Ovary (tissue), 10 donors: ENCODE measurements at regions of chr1 and their contacts with region 1.

Region 1: DNA sequence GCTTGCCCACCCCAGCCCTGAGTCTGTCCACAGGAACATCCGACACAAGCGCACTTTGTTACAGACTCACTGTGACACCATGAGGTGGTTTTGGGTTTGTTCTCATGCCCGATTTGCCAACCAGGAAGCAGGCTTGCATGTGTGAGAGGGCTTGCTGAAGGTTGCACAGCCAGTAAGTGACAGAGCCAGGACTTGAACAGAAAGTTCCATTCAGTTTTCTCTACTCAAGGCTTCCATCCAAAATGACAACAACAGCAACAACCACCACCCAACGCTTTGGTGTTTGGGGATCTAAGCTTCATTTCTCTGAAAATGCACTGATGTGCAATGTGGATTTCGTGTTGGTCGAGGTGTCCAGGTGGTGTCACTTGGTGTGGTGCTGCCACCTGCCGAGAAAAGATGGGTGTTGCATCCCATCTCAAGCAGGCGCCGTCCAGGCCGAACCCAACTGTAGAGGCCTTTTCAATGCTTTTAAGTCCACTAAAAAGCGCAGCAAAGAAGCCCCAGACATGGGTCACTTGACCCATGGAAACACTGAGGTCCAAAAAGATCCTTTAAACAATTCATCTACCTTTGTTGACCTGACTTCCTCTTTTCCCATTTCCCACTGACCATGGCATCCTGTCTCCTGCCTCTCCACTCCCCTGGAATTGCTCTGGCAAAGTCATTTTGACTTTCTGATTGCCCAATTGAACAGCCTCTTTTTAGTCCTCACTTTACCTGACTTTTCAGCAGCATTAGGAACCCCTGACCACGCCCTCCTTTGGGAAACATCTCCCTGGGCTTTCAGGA is 12.2 kb downstream of the CITED4 start:
- DNase-seq: peak; percentile 64 to 80 (median 75)
- H3K4me3 ChIP-seq: no peak overlapping the region
- H3K27ac ChIP-seq: no peak overlapping the region
- H3K4me1 ChIP-seq: no peaks in the 10 kb centered on the region
- H3K27me3 ChIP-seq: no peaks in the 10 kb centered on the region
- CTCF ChIP-seq: peak; percentile 81 to 83 (median 83)
- EP300 ChIP-seq: no peak
- POLR2A ChIP-seq: no peak

Region 2: GRCh38 chr1:40404670-40405462 is 445.1 kb before region 1 on chr1:
- intact Hi-C with region 1: no loop called
- DNase-seq: peak in 1 of 5 donors; percentile 40
- H3K4me3 ChIP-seq: no peak overlapping the region
- H3K27ac ChIP-seq: no peak overlapping the region
- H3K4me1 ChIP-seq: no peaks in the 10 kb centered on the region
- H3K27me3 ChIP-seq: no peaks in the 10 kb centered on the region
- CTCF ChIP-seq: peak; percentile 73 to 81 (median 80)
- EP300 ChIP-seq: no peak
- POLR2A ChIP-seq: no peak

Region 3: DNA sequence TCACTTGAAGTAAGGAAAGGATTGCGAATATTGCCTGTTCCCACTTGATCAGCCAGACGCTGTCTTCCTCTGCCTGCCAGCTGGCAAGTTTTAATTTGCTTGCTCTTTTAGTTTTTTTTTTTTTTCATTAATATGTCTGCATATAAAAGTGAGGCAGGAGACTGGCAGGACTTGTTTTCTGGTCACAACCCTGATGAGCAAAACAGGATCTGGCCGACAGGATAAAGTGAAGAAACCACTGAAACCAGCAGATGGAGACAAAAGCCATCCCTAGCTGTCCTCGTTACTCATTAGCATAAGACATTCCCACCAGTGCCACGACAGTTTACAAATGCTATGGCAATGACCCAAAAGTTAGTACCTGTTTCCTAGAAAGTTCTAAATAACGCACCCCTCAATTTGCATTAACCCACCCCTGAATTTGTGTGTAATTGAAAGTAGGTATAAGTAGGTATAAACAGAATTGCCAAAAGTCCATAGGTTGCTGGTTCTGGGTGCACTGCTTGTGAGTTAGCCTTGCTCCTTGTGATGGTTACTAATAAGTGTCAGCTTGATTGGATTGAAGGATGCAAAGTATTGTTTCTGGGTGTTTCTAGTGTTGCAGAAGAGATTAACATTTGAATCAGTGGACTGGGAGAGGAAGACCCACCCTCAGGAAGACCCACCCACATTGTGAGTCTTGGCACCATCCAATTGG is 257.7 kb before region 1 on chr1:
- intact Hi-C with region 1: loop called in 1 of 4 experiments (anchors 10 kb)
- DNase-seq: no peak
- H3K4me3 ChIP-seq: no peak overlapping the region
- H3K27ac ChIP-seq: no peak overlapping the region
- H3K4me1 ChIP-seq: no peaks in the 10 kb centered on the region
- H3K27me3 ChIP-seq: no peaks in the 10 kb centered on the region
- CTCF ChIP-seq: no peak
- EP300 ChIP-seq: no peak
- POLR2A ChIP-seq: no peak

Region 4: GRCh38 chr1:40774266-40774998 is 75.6 kb before region 1 on chr1:
- intact Hi-C with region 1: loop called in 2 of 4 experiments (anchors 5 to 10 kb)
- DNase-seq: peak; percentile 30 to 64 (median 55)
- H3K4me3 ChIP-seq: no peak overlapping the region
- H3K27ac ChIP-seq: no peak overlapping the region
- H3K4me1 ChIP-seq: no peaks in the 10 kb centered on the region
- H3K27me3 ChIP-seq: no peaks in the 10 kb centered on the region
- CTCF ChIP-seq: peak in 2 of 3 donors; percentile 33 to 41
- EP300 ChIP-seq: no peak
- POLR2A ChIP-seq: no peak

Region 5: GRCh38 chr1:40783001-40783905 is 66.7 kb before region 1 on chr1 and contains the start of gene KCNQ4:
- intact Hi-C with region 1: loop called in 2 of 4 experiments (anchors 10 kb)
- DNase-seq: peak; percentile 61 to 73 (median 70)
- H3K4me3 ChIP-seq: peak within 1 kb of the TSS; percentile 50
- H3K27ac ChIP-seq: no peak within 1 kb of the TSS
- H3K4me1 ChIP-seq: peaks cover 9% of the 10 kb centered on the region
- H3K27me3 ChIP-seq: no peaks in the 10 kb centered on the region
- CTCF ChIP-seq: no peak
- EP300 ChIP-seq: no peak
- POLR2A ChIP-seq: no peak
- total RNA-seq, gene KCNQ4: 0.36 to 3.1 (median 0.84) TPM

Region 6: GRCh38 chr1:40951943-40952743 is 102.1 kb after region 1 on chr1:
- intact Hi-C with region 1: loop called in 3 of 4 experiments (anchors 2 to 5 kb)
- DNase-seq: peak; percentile 63 to 82 (median 68)
- H3K4me3 ChIP-seq: no peak overlapping the region
- H3K27ac ChIP-seq: no peak overlapping the region
- H3K4me1 ChIP-seq: no peaks in the 10 kb centered on the region
- H3K27me3 ChIP-seq: no peaks in the 10 kb centered on the region
- CTCF ChIP-seq: peak; percentile 73 to 79 (median 77)
- EP300 ChIP-seq: no peak
- POLR2A ChIP-seq: no peak

Region 7: DNA sequence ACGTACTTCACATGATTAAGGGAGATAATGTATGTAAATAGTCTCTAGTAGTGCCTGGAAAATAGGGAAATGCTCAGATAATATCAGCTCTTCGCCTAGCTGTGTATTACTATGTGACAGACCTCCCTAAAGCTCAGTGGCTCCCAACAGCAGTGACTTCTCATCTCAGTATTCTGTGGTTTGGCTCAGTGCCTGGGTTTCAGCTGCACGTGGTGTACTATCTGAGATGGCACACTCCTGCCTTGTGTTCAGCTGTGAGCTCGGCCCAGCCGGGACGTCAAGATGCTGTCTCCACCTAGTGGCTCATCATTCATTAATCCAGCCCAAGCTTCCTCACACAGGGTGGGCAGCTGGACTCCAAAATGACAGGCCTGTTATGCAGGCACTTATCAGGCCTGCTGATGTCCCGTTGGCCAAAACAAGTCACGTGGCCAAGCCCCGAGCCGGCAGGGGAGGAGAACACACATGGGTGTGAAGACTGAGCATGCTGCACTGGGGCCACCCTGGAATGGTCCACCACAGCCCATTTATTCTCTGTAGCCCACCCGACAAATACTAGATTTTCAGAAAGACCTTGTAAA is 153.7 kb after region 1 on chr1:
- intact Hi-C with region 1: loop called in 1 of 4 experiments (anchors 5 kb)
- DNase-seq: peak; percentile 90 to 97 (median 94)
- H3K4me3 ChIP-seq: no peak overlapping the region
- H3K27ac ChIP-seq: peak overlapping the region in 1 of 2 donors; percentile 16
- H3K4me1 ChIP-seq: peaks cover 4% of the 10 kb centered on the region
- H3K27me3 ChIP-seq: no peaks in the 10 kb centered on the region
- CTCF ChIP-seq: peak; percentile 38 to 81 (median 73)
- EP300 ChIP-seq: no peak
- POLR2A ChIP-seq: no peak